GM13976 (cell line): ENCODE measurements at regions of chr17 and their contacts with region 1.

Region 1: GRCh38 chr17:21425736-21426135 is 49.6 kb downstream of the KCNJ12 start:
- DNase-seq: no peak
- CTCF ChIP-seq: no peak

Region 2: DNA sequence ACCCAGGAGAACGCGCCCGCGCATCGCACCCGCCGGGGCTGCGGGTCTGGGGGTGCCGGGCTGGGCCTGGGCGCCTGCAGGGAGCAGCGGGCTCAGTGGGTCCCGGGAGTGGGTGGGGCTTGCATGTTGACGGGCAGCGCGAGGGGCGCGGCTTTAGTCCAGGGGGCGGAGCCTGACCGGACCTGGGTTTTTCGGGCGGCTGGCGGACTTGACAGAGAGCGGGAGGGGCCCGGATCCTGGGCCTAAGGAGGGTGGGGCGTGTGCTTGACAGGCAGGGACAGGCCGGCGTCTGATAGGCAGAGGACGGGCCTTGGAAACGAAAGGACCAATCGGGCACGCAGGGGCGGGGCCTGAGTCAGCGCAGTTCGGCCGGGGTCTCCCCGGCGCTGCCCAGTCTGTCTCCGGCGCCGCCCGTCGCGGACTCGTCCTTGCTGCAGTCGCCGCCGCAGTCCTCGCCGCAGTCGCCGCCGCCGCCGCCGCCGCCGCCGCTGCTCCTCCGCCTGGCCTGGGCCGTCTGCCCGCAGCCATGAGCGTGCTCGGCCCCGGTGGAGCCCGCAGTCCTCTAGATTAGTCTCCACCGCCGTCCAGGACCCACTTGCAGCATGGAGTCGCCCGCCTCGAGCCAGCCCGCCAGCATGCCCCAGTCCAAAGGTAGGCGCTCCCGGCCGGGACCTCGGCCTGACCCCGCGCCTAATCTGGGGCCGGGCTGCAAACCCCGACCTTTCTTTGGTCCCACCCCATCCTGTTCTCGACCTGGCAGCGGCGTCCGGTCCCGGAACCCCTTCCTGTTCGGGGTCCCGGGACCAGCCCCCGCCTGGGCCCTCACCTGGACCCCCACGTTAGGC is 141.2 kb before region 1 on chr17 and contains the start of gene MAP2K3:
- in situ Hi-C with region 1: loop called (anchors 25 kb)
- DNase-seq: peak; percentile 99
- CTCF ChIP-seq: no peak

Region 3: GRCh38 chr17:21524211-21524591 is 98.5 kb after region 1 on chr17:
- in situ Hi-C with region 1: no loop called
- DNase-seq: no peak
- CTCF ChIP-seq: no peak